ENCODE measurements at regions of chr5 and their contacts with region 1.

Region 1: DNA sequence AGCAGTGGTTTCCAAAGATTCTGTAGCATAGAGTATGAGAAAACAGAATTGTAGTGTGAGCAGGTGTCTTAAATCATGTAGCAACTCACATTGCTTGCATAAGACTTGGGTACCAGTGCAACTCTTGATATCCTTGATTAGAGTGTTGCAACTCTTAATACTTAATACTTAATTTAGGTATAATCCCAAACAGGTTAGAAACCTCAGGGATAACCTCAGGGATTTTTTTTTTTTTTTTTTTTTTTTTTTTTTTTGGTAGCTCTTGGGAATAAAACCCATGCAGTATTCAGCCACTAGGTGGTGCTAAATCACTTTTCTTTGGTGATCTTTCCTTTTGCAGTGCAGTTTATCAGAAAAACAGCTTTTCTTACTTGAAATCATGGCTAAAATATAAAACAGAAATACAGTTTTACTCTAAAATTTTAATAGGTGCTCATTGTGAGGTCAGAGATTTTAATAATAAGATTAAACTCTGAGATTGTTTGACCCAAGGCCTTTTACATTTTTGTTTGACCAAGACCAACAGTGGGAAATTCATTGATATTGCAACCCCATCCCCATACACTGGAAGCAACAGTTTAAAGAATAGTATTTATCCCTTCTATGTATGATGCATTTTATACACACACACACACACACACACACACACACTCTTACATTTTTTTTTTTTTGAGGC is 55.3 kb downstream of the ERAP1 start:
- DNase-seq: peak; percentile 87
- ATAC-seq: no peak
- H3K4me3 ChIP-seq: no peak overlapping the region
- H3K27ac ChIP-seq: no peak overlapping the region
- H3K4me1 ChIP-seq: no peaks in the 10 kb centered on the region
- H3K27me3 ChIP-seq: no peaks in the 10 kb centered on the region
- CTCF ChIP-seq: peak; percentile 91

Region 2: GRCh38 chr5:96671441-96671840 is 81.0 kb before region 1 on chr5:
- CTCF ChIA-PET with region 1: no interaction called
- POLR2A ChIA-PET with region 1: no interaction called
- intact Hi-C with region 1: no loop called
- DNase-seq: no peak
- ATAC-seq: no peak
- H3K4me3 ChIP-seq: no peak overlapping the region
- H3K27ac ChIP-seq: no peak overlapping the region
- H3K4me1 ChIP-seq: peaks cover 6% of the 10 kb centered on the region
- H3K27me3 ChIP-seq: no peaks in the 10 kb centered on the region
- CTCF ChIP-seq: no peak

Region 3: GRCh38 chr5:96687812-96688453 is 64.5 kb before region 1 on chr5:
- CTCF ChIA-PET with region 1: interaction called, 14 read pairs
- POLR2A ChIA-PET with region 1: no interaction called
- intact Hi-C with region 1: no loop called
- DNase-seq: peak; percentile 57
- ATAC-seq: peak; percentile 84
- H3K4me3 ChIP-seq: peak overlapping the region; percentile 48
- H3K27ac ChIP-seq: 0 out of 2 replicates have a peak overlapping the region, but pooled peaks have one; percentile 1
- H3K4me1 ChIP-seq: peaks cover 5% of the 10 kb centered on the region
- H3K27me3 ChIP-seq: no peaks in the 10 kb centered on the region
- CTCF ChIP-seq: peak; percentile 71

Region 4: DNA sequence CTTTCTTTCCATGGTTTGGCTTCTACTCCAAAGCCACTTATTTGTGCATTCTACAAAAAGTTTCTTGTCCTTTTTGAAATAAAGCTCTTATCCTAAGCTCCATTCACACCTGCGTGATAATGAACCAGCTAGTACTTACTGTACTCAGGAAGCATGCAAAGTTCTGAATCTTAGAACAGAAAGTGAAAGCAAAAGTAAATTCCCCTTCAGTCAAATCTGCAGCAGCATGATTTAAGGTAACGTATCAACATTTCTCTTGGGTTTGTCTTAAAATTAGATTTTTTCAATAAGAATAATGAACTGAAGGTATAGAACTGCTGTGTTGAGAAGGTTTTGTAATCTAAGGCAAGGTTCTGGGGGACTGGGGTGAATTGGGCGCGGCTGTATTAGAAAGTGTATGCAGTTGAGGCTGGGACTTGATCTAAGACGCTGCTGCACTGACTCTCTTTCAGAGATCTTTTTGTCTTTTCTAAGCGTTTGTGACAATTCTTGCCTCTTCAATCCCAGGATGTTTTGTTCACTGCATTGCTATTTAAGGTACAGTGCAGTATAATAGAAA is 123.9 kb after region 1 on chr5 and contains the start of gene ERAP2:
- CTCF ChIA-PET with region 1: no interaction called
- POLR2A ChIA-PET with region 1: no interaction called
- intact Hi-C with region 1: no loop called
- DNase-seq: peak; percentile 59
- ATAC-seq: peak; percentile 43
- H3K4me3 ChIP-seq: peak within 1 kb of the TSS; percentile 83
- H3K27ac ChIP-seq: peak within 1 kb of the TSS; percentile 42
- H3K4me1 ChIP-seq: peaks cover 26% of the 10 kb centered on the region
- H3K27me3 ChIP-seq: no peaks in the 10 kb centered on the region
- CTCF ChIP-seq: no peak
- total RNA-seq, gene ERAP2: 9.6 and 12.0 TPM in 2 replicates

Region 5: GRCh38 chr5:96934708-96935558 is 182.5 kb after region 1 on chr5:
- CTCF ChIA-PET with region 1: interaction called, 7 read pairs
- POLR2A ChIA-PET with region 1: no interaction called
- intact Hi-C with region 1: loop called (anchors 2 kb)
- DNase-seq: peak; percentile 97
- ATAC-seq: peak; percentile 74
- H3K4me3 ChIP-seq: peak overlapping the region; percentile 76
- H3K27ac ChIP-seq: peak overlapping the region; percentile 86
- H3K4me1 ChIP-seq: peaks cover 35% of the 10 kb centered on the region
- H3K27me3 ChIP-seq: no peaks in the 10 kb centered on the region
- CTCF ChIP-seq: no peak

Region 6: GRCh38 chr5:97044052-97044451 is 291.6 kb after region 1 on chr5:
- CTCF ChIA-PET with region 1: no interaction called
- POLR2A ChIA-PET with region 1: no interaction called
- intact Hi-C with region 1: loop called (anchors 10 kb)
- DNase-seq: peak; percentile 49
- ATAC-seq: peak; percentile 74
- H3K4me3 ChIP-seq: no peak overlapping the region
- H3K27ac ChIP-seq: no peak overlapping the region
- H3K4me1 ChIP-seq: no peaks in the 10 kb centered on the region
- H3K27me3 ChIP-seq: no peaks in the 10 kb centered on the region
- CTCF ChIP-seq: peak; percentile 55

Region 7: GRCh38 chr5:97162045-97162444 is 409.6 kb after region 1 on chr5:
- CTCF ChIA-PET with region 1: no interaction called
- POLR2A ChIA-PET with region 1: no interaction called
- intact Hi-C with region 1: loop called (anchors 1 kb)
- DNase-seq: peak; percentile 87
- ATAC-seq: peak; percentile 84
- H3K4me3 ChIP-seq: no peak overlapping the region
- H3K27ac ChIP-seq: no peak overlapping the region
- H3K4me1 ChIP-seq: 0 out of 2 replicates have a peak, but pooled peaks cover 4% of the 10 kb centered on the region
- H3K27me3 ChIP-seq: no peaks in the 10 kb centered on the region
- CTCF ChIP-seq: peak; percentile 94

Region 8: DNA sequence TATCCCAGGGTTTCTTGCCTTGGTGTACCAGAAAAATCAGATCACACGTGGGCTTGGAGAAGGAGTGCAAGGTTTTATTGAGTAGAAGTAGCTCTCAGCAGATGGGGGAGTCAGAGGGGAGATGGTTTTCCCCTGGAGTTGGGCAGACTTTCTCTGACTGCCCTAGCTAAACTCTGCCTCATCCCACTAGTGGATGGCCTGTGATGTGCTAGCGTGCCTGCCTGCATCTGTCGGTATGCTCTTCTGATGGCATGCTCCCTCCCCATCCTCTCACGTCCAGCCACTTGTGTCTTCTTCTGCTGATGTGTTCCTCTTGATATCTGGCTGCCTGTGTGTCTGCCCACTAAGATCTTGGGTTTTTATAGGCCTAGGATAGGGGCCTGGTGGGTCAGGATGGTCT is 1404.9 kb after region 1 on chr5:
- CTCF ChIA-PET with region 1: interaction called, 13 read pairs
- POLR2A ChIA-PET with region 1: no interaction called
- intact Hi-C with region 1: no loop called
- DNase-seq: no peak
- ATAC-seq: no peak; the same call in 1 of the 2 replicates
- H3K4me3 ChIP-seq: no peak overlapping the region
- H3K27ac ChIP-seq: no peak overlapping the region
- H3K4me1 ChIP-seq: no peaks in the 10 kb centered on the region
- H3K27me3 ChIP-seq: no peaks in the 10 kb centered on the region
- CTCF ChIP-seq: peak; percentile 36; the same call in 1 of the 2 replicates

Region 9: DNA sequence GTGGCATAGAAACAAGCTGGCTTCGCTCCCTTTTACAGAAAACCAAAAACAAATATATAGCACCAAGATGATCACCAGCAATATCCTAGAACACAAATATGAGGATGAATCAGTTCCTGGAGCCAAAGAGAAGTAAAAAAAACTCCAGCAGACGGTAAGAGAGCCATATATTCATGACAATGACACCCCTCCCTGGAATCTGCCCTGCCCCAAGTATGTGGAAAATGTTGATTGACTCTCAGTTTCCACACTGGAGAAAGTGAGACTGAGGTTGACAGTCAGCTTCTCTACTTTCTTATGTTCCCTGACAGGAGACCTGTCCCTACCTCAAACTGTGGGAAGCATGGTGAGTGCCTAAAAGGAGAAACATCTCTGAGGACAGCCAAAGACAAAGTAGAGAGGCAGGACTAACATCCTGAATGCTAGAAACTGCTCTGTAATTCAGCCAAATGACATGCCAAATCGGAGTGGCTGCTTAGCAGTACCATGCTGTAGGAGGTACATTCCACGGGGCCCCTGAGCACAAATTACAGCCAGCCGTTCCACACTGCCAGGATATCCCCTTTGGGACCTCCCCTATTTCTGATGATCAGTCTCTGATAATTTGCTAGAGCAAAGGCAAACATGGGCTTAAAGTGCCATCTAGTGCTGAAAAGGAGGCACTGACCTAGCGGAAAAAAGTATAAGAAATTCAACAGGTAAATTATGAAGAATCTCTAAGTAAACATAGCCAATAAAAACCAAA is 1596.9 kb after region 1 on chr5:
- CTCF ChIA-PET with region 1: no interaction called
- POLR2A ChIA-PET with region 1: no interaction called
- intact Hi-C with region 1: loop called (anchors 1 kb)
- DNase-seq: peak; percentile 94
- ATAC-seq: peak; percentile 94
- H3K4me3 ChIP-seq: peak overlapping the region; percentile 34; the same call in 1 of the 2 replicates
- H3K27ac ChIP-seq: peak overlapping the region; percentile 90
- H3K4me1 ChIP-seq: peaks cover 5% of the 10 kb centered on the region; the same call in 1 of the 2 replicates
- H3K27me3 ChIP-seq: no peaks in the 10 kb centered on the region
- CTCF ChIP-seq: peak; percentile 99

Measured in PC-3 (cell line).